Gastrocnemius medialis (tissue), 4 donors: ENCODE measurements at regions of chr2 and their contacts with region 1.

Region 1: DNA sequence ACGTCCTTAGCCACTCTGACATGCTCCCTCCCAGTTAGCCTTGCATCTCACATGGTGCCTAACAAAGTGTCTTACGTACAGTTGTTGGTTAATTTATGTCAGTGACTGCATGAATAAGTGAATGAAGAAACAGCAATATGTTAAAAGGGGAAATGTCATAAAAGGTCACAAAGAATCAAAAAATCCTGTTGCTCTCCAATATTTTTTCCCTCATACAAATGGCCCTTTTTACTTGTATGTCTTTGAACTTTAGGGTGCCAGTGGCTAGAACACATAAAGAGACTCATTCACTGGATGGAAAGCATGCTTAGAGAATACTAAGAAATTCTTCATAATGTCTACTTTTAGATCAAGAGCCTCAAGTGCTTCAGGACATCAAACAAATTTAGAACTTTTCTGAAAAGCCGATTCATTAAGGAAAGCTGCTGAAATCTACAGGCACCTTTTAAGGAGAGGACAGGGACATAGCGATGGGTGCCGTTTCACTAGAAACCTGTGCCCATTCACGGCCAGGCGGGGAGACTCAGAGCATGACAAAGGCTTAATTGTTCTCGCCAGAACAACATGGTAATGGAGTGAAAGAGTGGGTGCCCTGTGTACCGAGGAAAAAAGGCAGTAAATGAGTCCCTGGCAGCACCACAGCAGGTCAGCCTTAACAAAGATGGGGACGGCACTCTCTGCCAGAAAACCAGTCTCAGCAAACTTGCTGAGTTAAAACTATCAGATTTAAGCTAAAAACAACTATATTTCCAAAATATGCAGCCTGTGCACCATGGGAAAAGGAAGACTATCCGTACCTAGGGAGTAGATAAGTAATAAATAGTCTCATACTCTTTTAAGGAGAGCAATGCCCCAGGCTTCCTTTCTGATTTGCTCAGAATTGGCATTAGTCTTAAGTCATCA is 71.6 kb upstream of the SPTBN1 start:
- DNase-seq: no peak
- ATAC-seq: peak in 1 of 2 donors; percentile 20
- H3K4me3 ChIP-seq: no peak overlapping the region
- H3K27ac ChIP-seq: peak overlapping the region; percentile 9 to 57 (median 44)
- H3K4me1 ChIP-seq: peaks cover 20 to 22% of the 10 kb centered on the region in 2 donors
- H3K27me3 ChIP-seq: no peaks in the 10 kb centered on the region
- CTCF ChIP-seq: no peak
- POLR2A ChIP-seq: no peak

Region 2: DNA sequence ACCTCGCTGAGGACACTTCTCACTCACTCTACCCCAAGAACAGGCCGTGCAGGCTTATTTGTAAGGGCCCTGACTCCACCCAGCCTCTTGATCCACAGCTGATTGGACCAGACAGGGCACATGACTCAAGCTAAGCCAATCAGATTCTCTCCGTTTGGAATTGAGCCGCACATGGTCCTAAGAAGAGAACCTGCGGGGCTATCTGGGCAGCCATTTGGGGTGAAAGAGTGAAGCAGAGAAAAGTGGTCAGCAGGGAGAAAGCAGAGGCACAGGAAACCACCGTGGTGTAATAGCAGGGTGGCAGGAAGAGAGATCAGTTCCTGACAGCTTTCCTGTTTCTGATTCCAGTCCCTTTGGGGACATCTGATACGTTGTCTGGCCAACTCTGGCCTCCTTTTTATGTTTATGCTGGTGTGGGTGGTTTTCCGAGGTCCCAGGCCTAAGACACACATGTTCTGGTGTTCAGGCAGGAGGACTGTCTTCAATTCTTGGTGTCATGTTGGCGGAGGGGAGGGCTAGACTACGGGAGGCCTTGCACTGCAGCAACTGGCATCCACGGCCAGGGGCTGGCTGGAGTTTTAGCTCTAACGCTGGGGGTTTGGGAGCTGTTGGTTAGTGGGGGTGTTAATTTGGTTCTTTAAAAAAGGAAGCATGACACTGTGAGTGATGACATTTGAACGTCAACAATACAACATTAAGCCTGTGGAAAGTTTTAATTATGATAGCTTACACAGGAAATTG is 45.4 kb after region 1 on chr2:
- in situ Hi-C with region 1: no loop called
- intact Hi-C with region 1: loop called (anchors 5 kb)
- DNase-seq: no peak
- ATAC-seq: no peak
- H3K4me3 ChIP-seq: no peak overlapping the region
- H3K27ac ChIP-seq: peak overlapping the region; percentile 63 to 74 (median 66)
- H3K4me1 ChIP-seq: peaks cover 47 to 70% of the 10 kb centered on the region in 2 donors
- H3K27me3 ChIP-seq: no peaks in the 10 kb centered on the region
- CTCF ChIP-seq: no peak
- POLR2A ChIP-seq: no peak